ENCODE measurements at regions of chr18 and their contacts with region 1.

Region 1: GRCh38 chr18:56314396-56314795 is 324.0 kb downstream of the TXNL1 start:
- DNase-seq: no peak

Region 2: GRCh38 chr18:56168049-56168781 is 146.2 kb before region 1 on chr18:
- intact Hi-C with region 1: loop called in 1 of 2 experiments (anchors 5 kb)
- DNase-seq: no peak

Measured in posterior vena cava (tissue), 2 donors.